Left colon (tissue), 2 donors: ENCODE measurements at regions of chr7 and their contacts with region 1.

Region 1: DNA sequence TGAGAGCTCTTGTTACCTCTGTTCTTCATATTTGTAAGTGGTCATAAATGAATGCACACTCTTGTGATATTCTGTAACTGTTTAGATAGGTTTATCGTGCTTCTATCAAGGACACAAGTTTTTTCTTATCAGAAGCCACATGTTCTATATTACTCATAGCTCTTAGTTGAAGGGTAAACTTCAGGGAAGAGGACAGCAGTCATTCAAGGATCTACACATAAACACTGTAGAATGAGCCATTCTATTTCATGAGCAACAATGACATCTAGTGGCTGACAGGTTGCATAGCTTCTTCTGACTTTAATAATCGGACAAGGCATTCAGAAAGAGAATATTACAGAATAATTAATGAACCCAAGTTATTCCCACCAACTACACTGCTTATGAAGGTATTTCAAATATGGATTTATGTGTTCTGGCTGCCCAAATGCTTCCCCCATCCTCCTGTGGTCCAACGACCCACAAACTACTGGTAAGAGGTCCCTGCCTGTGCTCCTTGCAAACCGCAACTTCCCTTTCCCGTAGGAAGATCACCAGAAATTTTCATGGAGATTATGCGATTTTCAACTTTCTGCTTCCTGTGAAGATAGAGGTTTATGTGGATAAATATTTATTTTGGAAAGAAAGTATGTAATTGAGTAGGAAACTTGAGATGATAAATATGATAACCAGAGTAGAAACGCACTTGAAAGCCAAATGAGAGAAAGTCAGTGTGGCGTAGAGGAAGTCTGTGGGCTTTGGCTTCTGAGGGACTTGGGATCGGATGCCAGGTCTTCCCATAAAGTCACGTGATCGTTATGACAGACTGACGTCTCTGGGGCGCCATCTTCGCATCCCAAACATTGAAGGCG is 16.8 kb upstream of the ABCB5 start:
- DNase-seq: no peak
- ATAC-seq: peak; percentile 73

Region 2: DNA sequence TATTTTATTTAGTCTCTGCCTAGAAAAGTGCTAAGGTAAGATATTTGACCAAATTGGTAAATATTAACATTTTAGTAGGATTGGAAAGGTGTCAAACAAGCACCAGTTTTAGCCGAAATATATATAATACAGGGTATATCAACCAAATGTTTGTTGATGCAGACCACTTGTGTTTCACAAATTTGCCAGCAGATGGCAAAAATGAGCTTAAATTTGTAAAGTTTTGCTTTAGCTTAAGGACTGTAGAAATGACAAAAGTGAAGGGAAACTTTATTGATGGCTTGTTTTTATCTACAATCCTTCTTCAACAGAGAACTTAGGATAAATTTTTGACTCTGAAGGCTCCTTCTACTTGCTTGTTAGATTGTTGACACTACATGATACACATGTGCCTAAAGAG is 885.0 kb before region 1 on chr7:
- intact Hi-C with region 1: loop called in 1 of 2 experiments (anchors 10 kb)
- DNase-seq: peak in 1 of 2 donors; percentile 21
- ATAC-seq: no peak

Region 3: GRCh38 chr7:19747740-19748339 is 850.8 kb before region 1 on chr7:
- intact Hi-C with region 1: loop called (anchors 10 kb)
- DNase-seq: no peak
- ATAC-seq: no peak

Region 4: DNA sequence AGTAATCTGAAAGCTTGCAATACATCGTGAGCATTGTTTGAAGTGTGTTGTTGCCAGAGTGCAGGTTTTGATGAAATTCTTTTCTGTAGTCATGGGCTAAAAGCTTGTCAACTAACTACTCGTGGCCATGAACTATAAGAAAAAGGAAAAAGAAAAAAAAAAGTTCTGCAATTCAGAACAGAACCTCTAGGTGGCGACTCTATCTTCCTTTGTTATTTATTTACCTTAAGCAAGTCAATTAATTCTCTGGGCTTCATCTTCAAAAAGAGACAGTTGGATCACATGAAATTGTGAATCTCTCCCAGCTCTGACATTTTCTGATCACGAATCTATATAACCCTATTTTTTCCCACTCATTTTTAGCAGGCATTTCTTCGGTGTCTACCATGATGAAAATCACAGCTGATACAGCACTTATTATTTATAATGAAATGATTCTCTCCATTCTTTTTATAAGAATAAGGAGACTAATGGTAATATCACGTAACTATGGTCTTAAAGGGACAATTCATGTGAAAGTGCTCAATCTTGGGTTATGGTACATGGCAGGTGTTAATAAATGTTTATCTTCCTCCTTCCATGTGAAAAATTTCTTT is 844.1 kb before region 1 on chr7:
- intact Hi-C with region 1: loop called (anchors 10 kb)
- DNase-seq: no peak
- ATAC-seq: no peak

Region 5: GRCh38 chr7:20466543-20467021 is 132.1 kb before region 1 on chr7:
- intact Hi-C with region 1: no loop called
- DNase-seq: no peak
- ATAC-seq: no peak